Activated CD4-positive, alpha-beta T cell treated with anti-CD3 and anti-CD28 coated beads for 36 hours (primary cell): ENCODE measurements at regions of chr4 and their contacts with region 1.

Region 1: DNA sequence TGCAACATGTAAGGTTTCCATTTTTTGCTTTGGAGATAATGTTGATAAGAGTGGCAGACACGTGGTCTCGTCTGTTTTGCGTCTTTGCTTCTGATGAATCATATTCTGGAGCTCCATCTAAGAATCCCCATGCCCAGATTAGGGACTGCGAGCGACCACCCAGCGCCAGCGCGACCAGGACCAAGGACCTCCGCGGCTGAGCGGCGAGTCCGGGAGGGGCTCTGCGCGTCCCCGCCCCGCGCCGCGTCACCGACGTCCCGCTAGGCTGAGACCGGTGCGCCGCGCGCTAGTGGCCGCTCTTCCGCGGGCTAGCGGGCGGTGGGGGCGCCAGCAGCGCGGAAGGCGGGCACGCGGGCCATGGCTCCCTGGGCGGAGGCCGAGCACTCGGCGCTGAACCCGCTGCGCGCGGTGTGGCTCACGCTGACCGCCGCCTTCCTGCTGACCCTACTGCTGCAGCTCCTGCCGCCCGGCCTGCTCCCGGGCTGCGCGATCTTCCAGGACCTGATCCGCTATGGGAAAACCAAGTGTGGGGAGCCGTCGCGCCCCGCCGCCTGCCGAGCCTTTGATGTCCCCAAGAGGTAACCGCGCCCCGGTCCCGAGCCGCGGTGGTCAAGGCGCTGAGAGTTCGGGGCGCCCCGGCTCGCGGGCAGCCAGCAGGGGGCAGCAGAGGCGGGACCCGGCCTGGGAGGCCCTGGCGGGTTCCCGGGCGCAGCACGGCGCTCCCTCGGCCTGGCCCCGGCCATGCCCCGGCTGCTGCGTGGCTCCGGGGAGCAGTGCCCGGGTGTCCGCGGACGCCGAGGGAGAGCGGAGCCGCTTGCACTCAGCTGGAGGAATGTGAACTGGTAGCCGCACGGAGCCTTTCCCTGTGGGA is at the start of gene SRD5A3:
- DNase-seq: peak; percentile 89
- ATAC-seq: peak; percentile 89
- H3K4me3 Mint-ChIP-seq: peak within 1 kb of the TSS; percentile 82
- H3K27ac Mint-ChIP-seq: peak within 1 kb of the TSS; percentile 90
- H3K4me1 Mint-ChIP-seq: peaks cover 25% of the 10 kb centered on the region
- H3K27me3 Mint-ChIP-seq: no peaks in the 10 kb centered on the region
- total RNA-seq, gene SRD5A3: 20.5 to 24.6 TPM

Region 2: DNA sequence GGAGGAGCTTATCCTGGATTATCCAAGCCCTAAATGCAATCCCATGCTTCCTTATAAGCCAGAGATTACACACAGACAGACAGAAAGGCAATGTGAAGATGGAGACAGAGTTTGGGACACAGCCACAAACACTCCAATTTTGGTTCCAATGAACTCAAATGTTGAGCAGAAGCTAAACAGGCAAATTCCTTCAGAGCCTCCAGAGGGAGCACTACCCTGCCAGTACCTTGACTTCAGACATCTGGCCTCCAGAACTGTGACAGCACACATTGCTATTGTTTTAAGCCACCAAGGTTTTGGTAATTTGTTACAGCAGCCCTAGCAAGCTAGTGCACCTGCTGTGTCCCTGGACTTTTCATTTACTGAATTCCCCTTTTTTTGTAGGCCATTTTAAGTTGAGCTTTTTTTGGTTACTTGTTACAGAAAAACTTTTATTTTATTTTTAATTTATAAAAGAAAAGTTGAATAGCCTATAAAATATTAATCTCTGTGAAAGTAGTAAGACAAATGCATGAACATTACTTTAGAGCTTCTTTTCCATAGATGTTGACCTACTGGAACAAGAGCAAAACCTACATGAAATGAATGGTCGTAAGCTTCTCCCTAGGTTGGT is 33.6 kb before region 1 on chr4:
- CTCF ChIA-PET with region 1: interaction called, 10 read pairs
- POLR2A ChIA-PET with region 1: no interaction called
- intact Hi-C with region 1: no loop called
- DNase-seq: peak; percentile 49
- ATAC-seq: peak; percentile 71
- H3K4me3 Mint-ChIP-seq: no peak overlapping the region
- H3K27ac Mint-ChIP-seq: no peak overlapping the region
- H3K4me1 Mint-ChIP-seq: peaks cover 10% of the 10 kb centered on the region
- H3K27me3 Mint-ChIP-seq: no peaks in the 10 kb centered on the region

Region 3: GRCh38 chr4:55395529-55396307 is 49.5 kb after region 1 on chr4 and contains the start of gene TMEM165:
- CTCF ChIA-PET with region 1: interaction called, 11 read pairs
- POLR2A ChIA-PET with region 1: no interaction called
- intact Hi-C with region 1: loop called (anchors 1 kb)
- DNase-seq: peak; percentile 96
- ATAC-seq: peak; percentile 97
- H3K4me3 Mint-ChIP-seq: peak within 1 kb of the TSS; percentile 89
- H3K27ac Mint-ChIP-seq: peak within 1 kb of the TSS; percentile 89
- H3K4me1 Mint-ChIP-seq: peaks cover 30% of the 10 kb centered on the region
- H3K27me3 Mint-ChIP-seq: no peaks in the 10 kb centered on the region
- total RNA-seq, gene TMEM165: 43.4 to 49.5 TPM

Region 4: DNA sequence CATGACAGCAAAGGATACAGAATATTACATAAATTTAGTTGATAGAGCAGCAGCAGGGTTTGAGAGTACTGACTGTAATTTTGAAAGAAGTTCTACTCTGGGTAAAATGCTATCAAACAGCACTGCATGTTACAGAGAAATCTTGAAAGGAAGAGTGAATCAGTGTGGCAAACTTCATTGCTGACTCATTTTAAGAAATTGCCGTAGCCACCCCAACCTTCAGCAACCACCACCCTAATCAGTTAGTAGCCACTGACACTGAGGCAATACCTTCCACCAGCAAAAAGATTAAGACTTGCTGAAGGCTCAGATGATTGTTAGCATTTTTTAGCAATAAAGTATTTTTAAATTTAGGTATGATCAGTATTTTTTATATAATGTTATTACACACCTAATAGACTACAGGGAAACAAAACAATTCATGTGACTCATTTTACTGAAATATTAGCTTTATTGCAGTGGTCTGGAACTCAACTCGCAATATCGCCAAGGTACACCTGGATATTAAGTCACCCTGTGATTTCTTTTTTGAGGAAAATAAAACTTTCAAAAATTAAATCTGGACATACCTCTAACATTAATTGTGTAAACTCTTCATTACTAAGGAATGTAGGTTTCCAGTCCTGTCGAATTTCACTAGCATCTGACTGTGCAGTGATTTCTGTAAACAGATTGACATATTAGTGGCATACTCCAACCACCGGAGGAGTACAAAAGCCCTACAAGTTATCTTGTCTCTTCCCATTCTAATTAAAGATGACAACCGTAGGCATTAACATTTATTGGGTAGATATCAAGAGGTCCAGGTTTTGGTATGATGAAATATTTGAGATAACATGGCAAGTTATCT is 129.4 kb after region 1 on chr4:
- CTCF ChIA-PET with region 1: no interaction called
- POLR2A ChIA-PET with region 1: no interaction called
- intact Hi-C with region 1: no loop called
- DNase-seq: peak; percentile 26
- ATAC-seq: peak; percentile 74
- H3K4me3 Mint-ChIP-seq: no peak overlapping the region
- H3K27ac Mint-ChIP-seq: no peak overlapping the region
- H3K4me1 Mint-ChIP-seq: peaks cover 7% of the 10 kb centered on the region
- H3K27me3 Mint-ChIP-seq: no peaks in the 10 kb centered on the region

Region 5: DNA sequence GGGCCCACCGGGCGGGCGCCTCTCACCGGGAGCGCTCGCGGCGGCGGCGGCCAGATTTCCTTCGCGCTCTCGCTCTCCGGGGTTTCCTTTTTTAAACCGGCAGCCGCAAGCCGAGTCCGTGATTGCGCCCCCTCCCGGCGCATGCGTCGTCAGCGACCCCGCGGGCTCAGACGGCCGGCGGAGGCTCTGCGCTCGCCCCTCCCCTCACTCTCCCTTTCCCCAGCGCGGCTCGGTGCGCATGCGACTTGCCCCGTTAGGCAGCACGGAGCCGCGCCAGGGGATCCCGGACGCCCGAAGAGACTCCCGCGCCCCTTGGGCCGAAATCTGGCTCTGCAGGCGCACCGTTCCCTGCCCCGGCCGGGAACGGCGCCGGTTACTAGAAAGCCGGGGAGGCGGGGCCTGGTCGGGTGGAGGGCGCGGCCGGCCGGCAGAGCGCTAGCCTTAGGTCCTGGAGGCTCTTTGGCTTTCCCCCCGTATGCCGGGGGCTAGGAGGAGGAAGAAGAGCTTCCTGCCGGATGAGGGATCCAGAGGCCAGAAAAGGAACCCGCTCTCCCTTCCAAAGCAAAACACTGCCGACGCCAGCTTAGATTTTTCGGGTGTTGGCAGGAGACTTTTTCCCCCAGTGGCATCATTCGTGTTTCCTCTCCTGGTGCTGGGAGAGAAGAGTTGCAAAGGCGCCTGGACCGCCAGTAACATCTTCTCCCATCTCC is 200.7 kb after region 1 on chr4 and contains the start of gene CLOCK:
- CTCF ChIA-PET with region 1: interaction called, 3 read pairs
- POLR2A ChIA-PET with region 1: no interaction called
- intact Hi-C with region 1: loop called (anchors 1 kb)
- DNase-seq: peak; percentile 90
- ATAC-seq: peak; percentile 77
- H3K4me3 Mint-ChIP-seq: peak within 1 kb of the TSS; percentile 90
- H3K27ac Mint-ChIP-seq: peak within 1 kb of the TSS; percentile 86
- H3K4me1 Mint-ChIP-seq: peaks cover 46% of the 10 kb centered on the region
- H3K27me3 Mint-ChIP-seq: peaks cover 7% of the 10 kb centered on the region
- total RNA-seq, gene CLOCK: 10.4 to 13.3 TPM

Region 6: GRCh38 chr4:55736605-55737183 is 390.5 kb after region 1 on chr4:
- CTCF ChIA-PET with region 1: no interaction called
- POLR2A ChIA-PET with region 1: no interaction called
- intact Hi-C with region 1: loop called in 1 of 2 experiments (anchors 2 kb)
- DNase-seq: no peak
- ATAC-seq: no peak
- H3K4me3 Mint-ChIP-seq: no peak overlapping the region
- H3K27ac Mint-ChIP-seq: no peak overlapping the region
- H3K4me1 Mint-ChIP-seq: no peaks in the 10 kb centered on the region
- H3K27me3 Mint-ChIP-seq: peaks cover 37% of the 10 kb centered on the region